ENCODE measurements at regions of chr5 and their contacts with region 1.

Region 1: DNA sequence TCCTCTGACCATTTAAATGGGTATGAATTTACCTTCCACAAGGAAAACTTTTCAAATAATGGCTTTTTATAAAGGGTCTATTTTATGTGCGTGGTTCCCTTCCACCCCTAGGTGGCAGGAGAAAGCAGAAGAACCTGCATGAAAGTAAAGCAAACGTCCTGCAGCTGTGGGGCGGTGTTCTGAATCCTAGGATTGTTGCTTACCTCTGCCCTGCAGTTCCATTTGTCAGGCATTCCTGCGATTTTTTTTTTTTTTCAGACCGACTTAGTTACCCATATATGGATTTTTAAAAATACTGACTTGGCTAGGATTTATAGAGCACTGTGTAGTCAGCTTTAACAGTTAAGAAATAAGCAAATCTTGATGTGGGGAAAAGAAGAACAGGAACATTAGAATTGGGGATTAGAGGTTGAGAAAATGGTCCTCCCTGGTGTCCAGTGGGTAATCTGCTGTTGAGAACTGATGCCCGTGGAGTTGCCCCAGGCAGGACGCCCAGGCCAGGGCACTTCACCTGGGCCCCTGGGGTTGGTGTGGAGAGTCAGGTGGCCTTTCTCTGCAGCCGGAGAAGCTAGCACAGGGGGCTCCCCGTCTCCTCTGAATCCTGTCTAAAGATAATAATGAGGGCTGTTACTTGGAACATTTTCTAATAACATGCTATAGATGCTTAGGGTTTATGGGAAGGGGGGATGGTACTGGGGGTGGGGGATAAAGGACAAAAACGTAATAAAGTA is 30.4 kb upstream of the LTC4S start:
- DNase-seq: peak; percentile 71
- ATAC-seq: peak; percentile 62
- H3K4me3 ChIP-seq: no peak overlapping the region
- H3K4me3 Mint-ChIP-seq: no peak overlapping the region
- H3K27ac ChIP-seq: no peak overlapping the region
- H3K27ac Mint-ChIP-seq: no peak overlapping the region
- H3K4me1 ChIP-seq: peaks cover 17 to 32% of the 10 kb centered on the region in 2 donors
- H3K4me1 Mint-ChIP-seq: peaks cover 45% of the 10 kb centered on the region
- H3K27me3 ChIP-seq: no peaks in the 10 kb centered on the region
- H3K27me3 Mint-ChIP-seq: no peaks in the 10 kb centered on the region
- CTCF ChIP-seq: peak; percentile 96

Region 2: GRCh38 chr5:179795863-179796833 is 32.8 kb after region 1 on chr5:
- CTCF ChIA-PET with region 1: interaction called, 17 read pairs
- POLR2A ChIA-PET with region 1: interaction called, 6 read pairs
- intact Hi-C with region 1: loop called (anchors 1 kb)
- DNase-seq: peak; percentile 86
- ATAC-seq: peak; percentile 79
- H3K4me3 ChIP-seq: peak overlapping the region; percentile 5 to 68 (median 63)
- H3K4me3 Mint-ChIP-seq: peak overlapping the region; percentile 70
- H3K27ac ChIP-seq: peak overlapping the region; percentile 41 to 66
- H3K27ac Mint-ChIP-seq: peak overlapping the region; percentile 70
- H3K4me1 ChIP-seq: peaks cover 28 to 32% of the 10 kb centered on the region in 2 donors
- H3K4me1 Mint-ChIP-seq: peaks cover 29% of the 10 kb centered on the region
- H3K27me3 ChIP-seq: no peaks in the 10 kb centered on the region
- H3K27me3 Mint-ChIP-seq: no peaks in the 10 kb centered on the region
- CTCF ChIP-seq: peak; percentile 75

Region 3: GRCh38 chr5:179812135-179812846 is 48.9 kb after region 1 on chr5:
- CTCF ChIA-PET with region 1: no interaction called
- POLR2A ChIA-PET with region 1: no interaction called
- intact Hi-C with region 1: no loop called
- DNase-seq: no peak
- ATAC-seq: no peak
- H3K4me3 ChIP-seq: no peak overlapping the region
- H3K4me3 Mint-ChIP-seq: no peak overlapping the region
- H3K27ac ChIP-seq: no peak overlapping the region
- H3K27ac Mint-ChIP-seq: no peak overlapping the region
- H3K4me1 ChIP-seq: peaks cover 7 to 8% of the 10 kb centered on the region in 2 donors
- H3K4me1 Mint-ChIP-seq: peaks cover 11% of the 10 kb centered on the region
- H3K27me3 ChIP-seq: peaks cover 0 to 4% (median 0%) of the 10 kb centered on the region in 4 experiments
- H3K27me3 Mint-ChIP-seq: no peaks in the 10 kb centered on the region
- CTCF ChIP-seq: no peak

Region 4: DNA sequence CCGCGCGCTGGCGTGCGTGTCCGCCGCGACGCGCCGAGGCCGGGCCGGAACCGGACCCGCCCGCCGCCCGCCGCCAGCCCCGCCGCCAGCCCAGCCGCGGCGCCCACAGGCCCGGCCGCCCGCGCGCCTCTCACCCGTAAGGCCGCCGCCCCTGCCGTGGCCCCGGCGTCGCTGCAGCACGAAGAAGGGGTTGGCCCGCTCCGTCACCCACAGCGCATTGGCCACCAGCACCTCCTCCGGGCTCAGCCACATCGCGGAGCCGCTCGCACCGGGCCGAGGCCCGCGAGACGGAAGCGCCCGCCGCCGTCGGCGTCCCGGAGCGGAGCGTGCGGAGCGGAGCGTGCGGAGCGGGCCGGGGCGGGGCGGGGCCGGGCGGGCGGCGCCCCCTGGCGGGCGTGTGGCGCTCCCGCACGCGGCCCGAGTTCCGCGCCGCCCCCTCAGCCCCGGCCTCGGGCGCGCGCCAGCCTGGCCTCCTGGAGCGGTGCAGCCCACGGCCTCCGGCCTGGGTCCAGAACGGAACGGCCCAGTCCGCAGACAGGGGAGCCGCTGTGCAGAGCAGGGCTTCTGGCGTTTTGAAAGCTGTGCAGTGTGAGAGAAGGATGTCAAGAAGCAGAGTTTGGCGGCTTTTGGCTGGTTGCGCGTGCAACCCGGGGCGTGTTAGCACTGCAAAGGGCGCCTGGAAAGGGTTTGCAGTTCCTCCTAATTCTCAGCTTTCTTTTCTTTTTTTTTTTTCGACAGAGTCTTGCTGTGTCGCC is 144.4 kb after region 1 on chr5 and contains the start of gene TBC1D9B:
- CTCF ChIA-PET with region 1: interaction called, 9 read pairs
- POLR2A ChIA-PET with region 1: no interaction called
- intact Hi-C with region 1: loop called (anchors 1 kb)
- DNase-seq: peak; percentile 88
- ATAC-seq: peak; percentile 88
- H3K4me3 ChIP-seq: peak within 1 kb of the TSS; percentile 47 to 61 (median 59)
- H3K4me3 Mint-ChIP-seq: peak within 1 kb of the TSS; percentile 92
- H3K27ac ChIP-seq: peak within 1 kb of the TSS in 1 of 2 donors; percentile 16
- H3K27ac Mint-ChIP-seq: peak within 1 kb of the TSS; percentile 94
- H3K4me1 ChIP-seq: peaks cover 13 to 24% of the 10 kb centered on the region in 2 donors
- H3K4me1 Mint-ChIP-seq: peaks cover 19% of the 10 kb centered on the region
- H3K27me3 ChIP-seq: no peaks in the 10 kb centered on the region
- H3K27me3 Mint-ChIP-seq: no peaks in the 10 kb centered on the region
- CTCF ChIP-seq: no peak
- total RNA-seq, gene TBC1D9B: 144 and 149 TPM in 2 replicates

Region 5: DNA sequence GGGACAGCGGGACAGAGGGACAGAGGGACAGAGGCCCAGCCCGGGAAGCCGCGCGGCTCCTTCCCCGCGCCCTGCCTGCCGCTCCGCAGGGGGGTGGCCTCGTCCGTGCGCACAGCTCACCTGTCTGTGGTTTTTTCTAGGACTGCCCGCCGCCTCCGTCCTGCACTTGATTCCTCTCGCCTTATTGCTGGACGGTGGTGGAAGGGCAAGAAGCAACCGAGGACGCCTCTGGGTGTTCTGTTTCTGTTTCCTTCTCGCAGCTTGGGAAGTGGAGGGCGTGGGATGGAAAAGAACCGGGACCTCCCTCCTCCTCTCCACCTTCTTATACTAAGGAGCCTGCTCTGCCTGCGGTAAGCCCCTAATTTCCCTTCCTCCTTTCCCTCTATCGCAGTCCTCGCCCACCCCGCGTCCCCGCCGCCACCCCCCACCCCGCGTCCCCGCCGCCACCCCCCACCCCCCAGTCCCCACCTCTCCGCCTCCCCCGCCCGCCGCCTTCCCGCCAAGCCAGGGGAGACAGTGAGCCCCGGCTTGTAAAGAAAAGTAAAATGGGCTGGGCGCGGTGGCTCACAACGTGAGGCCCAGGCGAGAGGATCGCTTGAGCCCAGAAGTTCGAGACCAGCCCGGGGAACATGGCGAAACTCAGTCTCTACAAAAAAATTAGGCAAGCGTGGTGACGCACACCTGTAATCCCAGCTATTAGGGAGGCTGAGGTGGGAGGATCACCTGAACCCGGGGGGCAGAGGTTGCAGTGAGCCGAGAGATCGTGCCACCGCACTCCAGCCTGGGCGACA is 895.6 kb after region 1 on chr5:
- CTCF ChIA-PET with region 1: no interaction called
- POLR2A ChIA-PET with region 1: no interaction called
- intact Hi-C with region 1: no loop called
- DNase-seq: no peak
- ATAC-seq: no peak
- H3K4me3 ChIP-seq: no peak overlapping the region
- H3K4me3 Mint-ChIP-seq: no peak overlapping the region
- H3K27ac ChIP-seq: no peak overlapping the region
- H3K27ac Mint-ChIP-seq: no peak overlapping the region
- H3K4me1 ChIP-seq: no peaks in the 10 kb centered on the region
- H3K4me1 Mint-ChIP-seq: no peaks in the 10 kb centered on the region
- H3K27me3 ChIP-seq: peaks cover 0 to 4% (median 1%) of the 10 kb centered on the region in 4 experiments
- H3K27me3 Mint-ChIP-seq: peaks cover 50% of the 10 kb centered on the region
- CTCF ChIP-seq: no peak

Measured in B cell (primary cell).